PC-9 (cell line): ENCODE measurements at regions of chr6 and their contacts with region 1.

Region 1: DNA sequence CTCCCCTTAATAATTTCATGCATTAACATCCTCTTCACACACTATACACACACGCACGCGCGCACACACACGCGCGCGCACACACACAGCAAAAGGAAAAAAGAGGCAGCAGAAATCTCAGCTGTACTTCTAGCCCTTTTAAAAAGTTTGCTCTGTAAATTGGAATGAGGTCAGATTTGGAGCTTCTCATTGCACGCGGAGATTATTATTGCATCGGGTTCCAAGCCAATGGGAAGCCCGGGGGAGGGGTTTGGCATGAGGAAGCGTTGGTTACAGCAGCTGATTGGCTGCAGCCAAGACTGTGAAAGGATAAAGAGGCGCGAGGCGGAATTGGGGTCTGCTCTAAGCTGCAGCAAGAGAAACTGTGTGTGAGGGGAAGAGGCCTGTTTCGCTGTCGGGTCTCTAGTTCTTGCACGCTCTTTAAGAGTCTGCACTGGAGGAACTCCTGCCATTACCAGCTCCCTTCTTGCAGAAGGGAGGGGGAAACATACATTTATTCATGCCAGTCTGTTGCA is at the start of gene SOX4:
- DNase-seq: peak; percentile 90 to 91
- H3K4me3 ChIP-seq: peak within 1 kb of the TSS; percentile 98
- H3K27ac ChIP-seq: peak within 1 kb of the TSS; percentile 73
- H3K4me1 ChIP-seq: peaks cover 15% of the 10 kb centered on the region
- H3K27me3 ChIP-seq: no peaks in the 10 kb centered on the region
- CTCF ChIP-seq: no peak
- total RNA-seq, gene SOX4: 32.8 and 36.1 TPM in 2 replicates

Region 2: DNA sequence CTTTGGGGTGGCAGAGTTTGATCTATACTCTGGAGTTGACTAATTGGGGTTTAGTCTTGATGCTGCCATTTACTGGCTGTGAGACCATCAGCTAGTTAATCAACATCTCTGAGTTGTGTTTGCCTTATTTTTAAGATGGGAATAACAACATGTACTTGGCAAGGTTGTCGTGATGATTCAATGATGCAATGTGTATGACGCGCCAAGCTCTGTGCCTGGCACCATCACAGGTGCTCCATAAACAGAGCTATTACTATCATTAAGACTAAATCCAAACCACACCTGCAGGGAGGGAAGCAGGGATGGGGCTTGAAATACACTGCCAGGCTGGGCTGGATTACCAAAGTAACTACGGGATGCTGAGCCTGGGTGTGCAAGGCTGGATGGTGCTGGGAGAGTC is 1251.9 kb before region 1 on chr6:
- CTCF ChIA-PET with region 1: no interaction called
- POLR2A ChIA-PET with region 1: interaction called, 24 read pairs
- intact Hi-C with region 1: no loop called
- DNase-seq: no peak
- H3K4me3 ChIP-seq: no peak overlapping the region
- H3K27ac ChIP-seq: no peak overlapping the region
- H3K4me1 ChIP-seq: no peaks in the 10 kb centered on the region
- H3K27me3 ChIP-seq: no peaks in the 10 kb centered on the region
- CTCF ChIP-seq: no peak

Region 3: GRCh38 chr6:20952699-20953474 is 640.6 kb before region 1 on chr6:
- CTCF ChIA-PET with region 1: interaction called, 11 read pairs
- POLR2A ChIA-PET with region 1: no interaction called
- intact Hi-C with region 1: no loop called
- DNase-seq: no peak
- H3K4me3 ChIP-seq: no peak overlapping the region
- H3K27ac ChIP-seq: no peak overlapping the region
- H3K4me1 ChIP-seq: no peaks in the 10 kb centered on the region
- H3K27me3 ChIP-seq: no peaks in the 10 kb centered on the region
- CTCF ChIP-seq: no peak

Region 4: GRCh38 chr6:21625642-21626041 is 32.2 kb after region 1 on chr6:
- CTCF ChIA-PET with region 1: interaction called, 10 read pairs
- POLR2A ChIA-PET with region 1: interaction called, 4 read pairs
- intact Hi-C with region 1: no loop called
- DNase-seq: no peak
- H3K4me3 ChIP-seq: no peak overlapping the region
- H3K27ac ChIP-seq: no peak overlapping the region
- H3K4me1 ChIP-seq: no peaks in the 10 kb centered on the region; the same call in 1 of the 2 replicates
- H3K27me3 ChIP-seq: no peaks in the 10 kb centered on the region
- CTCF ChIP-seq: no peak

Region 5: GRCh38 chr6:21800948-21801438 is 207.5 kb after region 1 on chr6:
- CTCF ChIA-PET with region 1: no interaction called
- POLR2A ChIA-PET with region 1: no interaction called
- intact Hi-C with region 1: loop called (anchors 5 kb)
- DNase-seq: peak; percentile 76 to 95
- H3K4me3 ChIP-seq: no peak overlapping the region
- H3K27ac ChIP-seq: peak overlapping the region; percentile 60
- H3K4me1 ChIP-seq: peaks cover 23% of the 10 kb centered on the region
- H3K27me3 ChIP-seq: no peaks in the 10 kb centered on the region
- CTCF ChIP-seq: no peak

Region 6: DNA sequence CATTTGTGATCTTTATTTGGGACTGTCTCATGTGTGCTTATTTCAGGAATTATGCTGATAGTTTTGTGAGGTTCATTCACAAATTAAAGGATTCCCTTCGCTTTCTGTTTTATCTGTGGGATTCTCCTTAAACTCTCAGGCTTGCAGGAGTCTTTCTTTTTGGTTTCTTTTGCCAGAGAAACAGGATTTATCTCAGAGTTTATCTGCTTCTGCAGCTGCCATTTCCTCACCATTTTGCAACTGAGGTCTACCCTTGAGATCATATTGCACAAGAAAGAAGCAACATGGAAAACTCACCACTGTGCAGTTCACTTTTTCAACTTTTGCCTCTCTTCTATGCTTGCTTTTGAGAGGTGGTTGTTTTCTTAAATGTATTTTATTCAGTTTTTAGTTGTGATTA is 502.4 kb after region 1 on chr6:
- CTCF ChIA-PET with region 1: no interaction called
- POLR2A ChIA-PET with region 1: no interaction called
- intact Hi-C with region 1: no loop called
- DNase-seq: no peak
- H3K4me3 ChIP-seq: no peak overlapping the region
- H3K27ac ChIP-seq: no peak overlapping the region
- H3K4me1 ChIP-seq: no peaks in the 10 kb centered on the region
- H3K27me3 ChIP-seq: no peaks in the 10 kb centered on the region
- CTCF ChIP-seq: no peak

Region 7: DNA sequence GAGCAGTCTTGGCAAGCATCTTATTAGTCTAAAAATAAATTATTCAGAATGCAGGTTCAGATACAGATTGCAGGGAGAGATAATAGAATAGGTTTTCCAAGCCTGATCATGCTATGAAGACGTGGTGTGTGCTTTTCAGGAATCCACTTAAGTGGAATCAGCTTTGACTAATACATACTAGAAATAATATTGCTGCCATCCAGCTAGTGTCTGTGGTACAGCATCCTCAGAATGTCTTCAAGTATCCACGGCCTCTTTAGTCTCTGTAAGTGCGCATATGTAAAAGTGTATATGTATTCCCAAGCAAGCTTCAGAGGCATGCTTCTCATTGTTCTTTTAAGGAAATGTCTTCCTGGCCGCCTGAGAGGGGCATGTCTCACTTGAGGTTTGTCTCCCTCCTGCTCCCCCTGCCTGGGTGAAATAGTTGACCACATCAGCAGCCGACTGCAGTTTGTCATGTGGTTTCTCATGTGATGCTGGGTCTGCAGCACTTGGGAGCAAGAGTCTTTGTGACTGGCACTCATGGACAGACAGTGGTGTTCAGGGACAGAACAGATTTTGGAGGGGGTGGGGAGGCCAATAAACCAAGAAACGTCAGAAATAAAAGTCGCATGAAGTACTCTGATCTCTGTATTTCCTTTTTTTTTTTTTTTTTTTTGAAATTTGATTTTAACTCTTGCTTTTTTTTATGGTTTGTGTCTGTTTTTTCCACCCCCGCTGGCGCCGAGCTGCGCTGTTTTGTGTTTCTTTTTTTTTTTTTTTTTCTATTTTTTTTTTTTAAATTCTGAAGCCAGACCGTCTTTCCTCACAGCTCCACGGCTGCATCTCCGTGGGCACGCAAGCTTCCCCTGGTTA is 552.6 kb after region 1 on chr6:
- CTCF ChIA-PET with region 1: no interaction called
- POLR2A ChIA-PET with region 1: interaction called, 14 read pairs
- intact Hi-C with region 1: loop called (anchors 1 kb)
- DNase-seq: no peak
- H3K4me3 ChIP-seq: no peak overlapping the region
- H3K27ac ChIP-seq: no peak overlapping the region
- H3K4me1 ChIP-seq: peaks cover 13% of the 10 kb centered on the region
- H3K27me3 ChIP-seq: no peaks in the 10 kb centered on the region
- CTCF ChIP-seq: no peak

Region 8: DNA sequence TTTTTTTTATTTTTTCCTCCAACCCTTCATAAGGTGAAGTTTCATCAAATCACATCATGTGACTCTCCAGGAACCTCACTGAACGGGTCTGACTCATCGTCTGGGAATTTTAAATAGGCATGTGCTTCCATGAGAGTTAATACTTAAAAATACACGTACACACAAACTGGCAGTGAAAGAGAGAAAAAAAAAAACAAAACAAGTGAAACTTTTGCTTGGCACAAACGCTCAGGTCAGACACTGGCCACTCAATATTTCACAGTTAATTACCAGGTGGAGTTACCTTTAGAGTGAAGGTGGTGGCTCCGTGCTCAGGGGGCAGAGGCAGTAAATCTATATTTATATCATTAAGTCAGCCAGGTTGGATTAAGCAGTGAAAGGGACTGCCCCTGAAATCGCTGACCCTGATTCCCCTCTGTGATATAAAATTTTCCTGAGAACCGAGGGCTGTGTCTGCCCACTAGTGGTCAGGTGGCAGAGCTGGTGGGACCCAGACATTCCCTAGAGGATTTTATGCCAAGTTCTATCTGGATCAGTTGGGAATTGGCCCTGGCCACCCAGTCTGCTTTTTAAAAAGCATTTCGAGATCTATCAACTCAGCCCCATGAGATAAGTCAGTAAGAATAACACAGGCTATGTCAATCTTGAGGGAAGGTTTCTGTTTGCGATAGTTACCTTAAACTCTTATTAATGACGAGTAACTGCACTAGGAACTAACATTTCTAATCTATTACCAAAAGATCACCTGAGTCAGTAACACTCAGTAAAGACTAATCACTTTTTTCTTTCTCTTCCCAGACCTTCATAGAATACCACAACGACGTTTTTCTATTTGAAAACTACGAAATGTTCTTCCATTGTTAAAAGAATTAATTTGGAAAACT is 1235.0 kb after region 1 on chr6:
- CTCF ChIA-PET with region 1: no interaction called
- POLR2A ChIA-PET with region 1: interaction called, 6 read pairs
- intact Hi-C with region 1: loop called (anchors 2 kb)
- DNase-seq: peak; percentile 71 to 97
- H3K4me3 ChIP-seq: peak overlapping the region; percentile 27
- H3K27ac ChIP-seq: peak overlapping the region; percentile 83
- H3K4me1 ChIP-seq: peaks cover 37% of the 10 kb centered on the region
- H3K27me3 ChIP-seq: no peaks in the 10 kb centered on the region
- CTCF ChIP-seq: peak; percentile 77